PC-3 (cell line): ENCODE measurements at regions of chr16 and their contacts with region 1.

Region 1: DNA sequence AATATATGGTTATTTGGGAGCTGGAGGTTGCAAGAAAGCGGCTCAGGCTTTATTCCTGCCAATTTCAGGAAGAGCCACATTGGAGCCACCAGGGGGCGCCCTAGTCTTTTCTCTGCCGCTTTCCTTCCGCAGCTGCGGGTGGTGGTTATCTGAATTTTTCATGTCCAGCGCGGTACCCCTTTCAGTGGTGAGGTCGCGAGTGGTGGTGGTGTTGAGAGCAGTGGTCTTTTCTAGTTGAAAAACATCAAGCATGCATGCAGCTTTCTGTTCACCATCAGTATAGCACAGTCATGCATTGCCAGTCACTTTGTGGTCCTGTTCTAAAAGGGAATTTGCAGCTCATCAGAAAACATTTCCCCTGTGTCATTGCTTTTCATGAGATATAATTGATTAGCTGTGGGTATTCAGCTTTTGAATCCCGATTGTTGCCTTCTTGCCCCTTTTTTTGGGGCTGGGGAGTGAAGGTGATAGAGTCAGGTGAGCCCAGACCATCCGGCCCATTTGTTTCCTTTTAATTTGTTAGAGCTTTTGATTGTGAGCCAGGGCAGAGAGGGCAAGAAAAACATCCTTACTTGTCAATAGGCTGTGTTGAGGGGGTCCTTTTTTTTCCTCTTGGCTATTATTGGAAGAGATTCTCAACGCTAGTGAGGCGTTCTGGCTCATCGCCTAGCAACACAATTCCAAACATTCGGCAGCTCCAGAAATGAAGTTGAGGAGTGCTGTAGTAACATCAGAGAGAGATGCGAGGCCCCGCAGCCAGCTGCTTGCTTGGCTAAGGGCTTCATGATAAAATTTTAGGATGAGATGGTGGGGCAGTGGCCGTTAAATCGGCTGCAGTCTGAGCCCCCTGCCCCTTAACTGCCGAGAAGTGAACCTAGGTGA is 119.0 kb downstream of the SNX29 start:
- DNase-seq: peak; percentile 58
- ATAC-seq: no peak
- H3K4me3 ChIP-seq: no peak overlapping the region
- H3K27ac ChIP-seq: no peak overlapping the region
- H3K4me1 ChIP-seq: peaks cover 29% of the 10 kb centered on the region
- H3K27me3 ChIP-seq: no peaks in the 10 kb centered on the region
- CTCF ChIP-seq: peak; percentile 90

Region 2: DNA sequence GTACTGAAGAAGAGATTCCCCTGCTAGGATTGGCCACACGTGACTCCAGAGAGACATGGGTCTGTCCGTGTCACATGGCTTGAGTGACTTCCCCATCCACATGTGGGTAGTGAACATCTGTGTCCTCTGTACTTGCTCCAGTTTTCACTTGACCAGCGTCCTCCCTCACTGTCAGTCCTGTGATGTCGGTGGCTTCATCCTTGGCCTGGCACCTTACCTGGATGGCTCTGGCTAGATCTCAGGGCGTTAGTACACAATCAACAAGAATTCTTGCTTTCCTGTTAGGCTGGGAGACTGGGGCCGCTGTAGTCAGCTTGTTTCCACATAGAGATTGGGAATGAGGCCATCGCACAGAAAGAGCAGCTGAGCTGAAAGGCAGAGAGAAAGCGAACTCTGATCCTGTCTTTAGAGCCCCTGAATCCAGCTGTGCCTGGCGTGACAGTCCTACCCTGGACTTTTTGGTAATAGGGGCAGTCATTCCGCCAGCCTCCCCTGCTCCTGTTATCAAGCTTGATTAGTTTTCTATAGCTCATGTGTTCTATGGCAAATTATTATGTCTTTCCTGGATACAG is 108.3 kb after region 1 on chr16:
- CTCF ChIA-PET with region 1: no interaction called
- POLR2A ChIA-PET with region 1: no interaction called
- intact Hi-C with region 1: no loop called
- DNase-seq: no peak
- ATAC-seq: no peak
- H3K4me3 ChIP-seq: no peak overlapping the region
- H3K27ac ChIP-seq: no peak overlapping the region
- H3K4me1 ChIP-seq: no peaks in the 10 kb centered on the region
- H3K27me3 ChIP-seq: no peaks in the 10 kb centered on the region
- CTCF ChIP-seq: no peak

Region 3: GRCh38 chr16:12271006-12271405 is 175.5 kb after region 1 on chr16:
- CTCF ChIA-PET with region 1: interaction called, 5 read pairs
- POLR2A ChIA-PET with region 1: no interaction called
- intact Hi-C with region 1: loop called (anchors 1 kb)
- DNase-seq: peak; percentile 56
- ATAC-seq: peak; percentile 74
- H3K4me3 ChIP-seq: no peak overlapping the region
- H3K27ac ChIP-seq: no peak overlapping the region
- H3K4me1 ChIP-seq: 0 out of 2 replicates have a peak, but pooled peaks cover 4% of the 10 kb centered on the region
- H3K27me3 ChIP-seq: no peaks in the 10 kb centered on the region
- CTCF ChIP-seq: peak; percentile 64

Region 4: DNA sequence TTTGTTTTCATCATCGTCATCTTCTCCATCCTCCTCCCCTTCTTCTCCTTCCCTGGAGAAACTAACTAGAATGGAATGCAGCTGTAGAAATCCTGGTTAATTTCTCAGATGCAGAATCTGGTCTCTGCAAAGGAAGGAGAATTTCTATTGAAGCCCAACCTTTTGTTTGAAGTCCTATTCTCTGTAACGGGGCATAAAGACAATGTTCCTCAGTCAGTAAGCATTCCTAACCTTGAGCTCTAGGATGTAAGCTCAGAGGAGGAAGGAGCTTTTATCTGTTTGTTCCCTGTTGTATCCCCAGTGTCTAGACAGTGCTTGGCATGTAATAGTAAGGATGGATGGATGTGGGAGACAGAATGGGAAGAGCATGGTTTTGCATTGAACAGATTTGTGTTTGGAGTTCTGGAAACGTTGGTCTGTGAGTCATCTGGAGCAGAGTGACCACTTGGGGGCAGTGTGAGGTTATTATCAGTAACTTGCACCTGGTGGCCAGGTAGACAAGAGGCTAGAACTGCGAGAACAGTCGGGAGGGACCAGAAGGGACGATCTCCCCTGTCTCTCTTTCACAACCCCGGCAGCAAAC is 244.7 kb after region 1 on chr16:
- CTCF ChIA-PET with region 1: interaction called, 22 read pairs
- POLR2A ChIA-PET with region 1: interaction called, 3 read pairs
- intact Hi-C with region 1: loop called (anchors 1 kb)
- DNase-seq: peak; percentile 60
- ATAC-seq: 0 out of 2 replicates have a peak, but pooled peaks have one; percentile 4
- H3K4me3 ChIP-seq: no peak overlapping the region
- H3K27ac ChIP-seq: peak overlapping the region; percentile 97
- H3K4me1 ChIP-seq: peaks cover 32% of the 10 kb centered on the region
- H3K27me3 ChIP-seq: no peaks in the 10 kb centered on the region
- CTCF ChIP-seq: peak; percentile 75